PC-9 (cell line): ENCODE measurements at regions of chr1 and their contacts with region 1.

Region 1: GRCh38 chr1:147273409-147274336 is 31.2 kb downstream of the CHD1L start:
- DNase-seq: peak; percentile 13 to 69
- H3K4me3 ChIP-seq: no peak overlapping the region
- H3K27ac ChIP-seq: peak overlapping the region; percentile 89
- H3K4me1 ChIP-seq: peaks cover 12% of the 10 kb centered on the region
- H3K27me3 ChIP-seq: no peaks in the 10 kb centered on the region
- CTCF ChIP-seq: peak; percentile 62

Region 2: DNA sequence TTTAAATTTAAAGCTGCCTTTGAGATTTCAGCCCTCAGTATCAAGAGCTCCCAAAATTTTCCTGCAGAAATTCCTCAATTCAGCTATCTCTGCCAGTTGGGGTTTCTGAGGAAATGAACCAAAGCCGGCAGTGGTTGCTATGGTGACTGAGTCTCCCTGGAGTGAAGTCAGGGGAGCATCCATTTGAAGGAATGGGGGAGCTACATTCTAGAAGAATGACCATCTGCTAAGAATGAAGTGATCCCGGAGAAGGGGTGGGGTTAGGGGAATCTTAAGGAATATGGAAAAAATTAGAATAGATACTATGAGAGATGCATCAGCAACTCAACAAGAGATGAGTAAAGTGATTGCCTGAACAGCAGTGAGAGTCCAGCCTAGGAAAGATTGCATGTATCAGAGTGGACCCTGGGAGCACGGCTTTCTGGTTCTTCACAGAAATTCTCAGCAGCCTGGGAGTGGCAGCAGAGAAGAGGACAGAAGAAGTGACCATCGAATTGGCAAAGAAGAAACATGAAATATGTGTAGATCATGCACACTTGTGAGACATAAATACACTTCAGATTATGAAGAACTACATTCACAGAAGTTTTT is 63.5 kb after region 1 on chr1:
- CTCF ChIA-PET with region 1: no interaction called
- POLR2A ChIA-PET with region 1: no interaction called
- intact Hi-C with region 1: no loop called
- DNase-seq: no peak
- H3K4me3 ChIP-seq: no peak overlapping the region
- H3K27ac ChIP-seq: no peak overlapping the region
- H3K4me1 ChIP-seq: no peaks in the 10 kb centered on the region
- H3K27me3 ChIP-seq: peaks cover 61% of the 10 kb centered on the region
- CTCF ChIP-seq: no peak

Region 3: GRCh38 chr1:147389532-147390524 is 116.2 kb after region 1 on chr1:
- CTCF ChIA-PET with region 1: interaction called, 11 read pairs
- POLR2A ChIA-PET with region 1: no interaction called
- intact Hi-C with region 1: loop called (anchors 5 kb)
- DNase-seq: peak in 1 of 2 experiments; percentile 5
- H3K4me3 ChIP-seq: no peak overlapping the region
- H3K27ac ChIP-seq: no peak overlapping the region
- H3K4me1 ChIP-seq: no peaks in the 10 kb centered on the region
- H3K27me3 ChIP-seq: no peaks in the 10 kb centered on the region
- CTCF ChIP-seq: peak; percentile 88